ENCODE measurements at regions of chr1 and their contacts with region 1.

Region 1: DNA sequence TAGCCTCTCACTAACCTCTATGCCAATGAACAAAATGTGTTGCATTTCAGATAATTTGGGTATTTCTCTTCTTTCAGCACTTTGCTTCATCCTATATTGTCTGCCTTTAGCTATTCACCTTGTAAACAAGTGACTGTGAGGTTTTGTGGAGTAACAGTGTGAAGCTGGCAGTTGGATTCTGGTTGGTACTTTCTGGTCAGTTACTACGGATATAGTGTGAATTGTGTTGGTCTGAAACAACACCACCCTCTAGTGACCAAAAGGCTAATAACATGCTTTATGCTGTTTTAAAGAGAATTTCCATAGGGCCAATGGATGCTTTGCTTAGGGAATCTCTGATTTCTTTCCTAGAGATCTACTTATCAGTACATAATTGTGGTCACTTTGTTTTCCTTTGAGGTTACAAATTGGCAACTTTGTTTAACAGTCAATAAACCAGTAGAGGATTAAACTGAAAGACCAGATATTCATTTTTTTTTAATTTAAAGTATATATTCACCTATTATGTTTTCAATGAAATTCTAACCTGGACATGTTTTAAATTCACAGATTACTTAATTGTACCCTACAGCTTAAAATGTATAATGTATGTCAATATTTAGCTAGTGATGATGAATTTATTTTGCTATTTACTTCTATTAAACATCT is 2.5 kb upstream of the PTGER3 start:
- DNase-seq: peak; percentile 71
- CTCF ChIP-seq: peak; percentile 48

Region 2: GRCh38 chr1:70142075-70142474 is 908.0 kb before region 1 on chr1:
- in situ Hi-C with region 1: loop called (anchors 25 kb)
- DNase-seq: no peak
- CTCF ChIP-seq: no peak

Region 3: DNA sequence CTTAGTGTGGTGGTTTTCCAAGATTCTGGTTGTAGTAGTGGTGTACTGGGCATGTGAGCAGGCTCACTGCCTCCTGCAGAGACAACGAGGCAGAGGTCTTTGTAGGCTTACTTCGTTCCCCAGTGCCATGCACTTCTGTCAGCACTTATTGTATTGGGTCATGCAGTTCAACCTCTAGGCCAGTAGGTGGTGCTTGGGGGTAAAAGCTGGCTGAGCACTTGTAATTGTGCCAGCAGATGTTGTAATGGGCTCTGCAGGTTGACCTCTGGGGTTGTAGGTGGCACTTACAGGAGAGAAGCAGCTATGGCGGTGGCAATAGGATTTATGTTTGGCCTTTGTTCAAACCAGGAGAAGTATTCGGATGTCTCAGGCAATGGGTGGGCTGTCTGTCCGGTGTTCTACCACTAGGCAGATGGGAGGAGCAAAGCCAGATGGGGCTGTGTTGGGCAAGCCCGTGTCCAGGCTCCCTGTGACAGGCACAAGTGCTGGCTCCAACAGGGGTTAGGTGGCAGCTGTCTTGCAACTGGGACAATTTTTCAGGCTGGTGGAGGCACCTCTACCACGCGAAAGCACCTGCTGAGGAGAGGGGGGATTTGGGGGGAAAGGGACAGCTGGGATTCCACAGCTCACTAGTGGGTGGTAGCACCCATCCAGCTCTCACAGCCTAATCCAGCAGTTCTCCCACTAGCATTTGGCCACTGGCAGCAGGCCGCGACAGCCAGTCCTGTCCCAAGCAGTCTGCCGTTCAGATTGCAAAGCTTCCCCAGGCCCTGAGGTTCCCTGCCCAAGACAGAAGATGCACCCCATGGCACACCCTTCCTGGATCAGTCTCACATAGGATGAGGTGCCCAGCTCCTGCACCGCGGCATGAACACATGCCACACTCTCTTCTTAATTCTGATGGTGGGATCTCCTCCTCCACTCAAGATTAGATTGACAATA is 364.5 kb before region 1 on chr1:
- in situ Hi-C with region 1: loop called (anchors 25 kb)
- DNase-seq: peak; percentile 47
- CTCF ChIP-seq: peak; percentile 92

Region 4: DNA sequence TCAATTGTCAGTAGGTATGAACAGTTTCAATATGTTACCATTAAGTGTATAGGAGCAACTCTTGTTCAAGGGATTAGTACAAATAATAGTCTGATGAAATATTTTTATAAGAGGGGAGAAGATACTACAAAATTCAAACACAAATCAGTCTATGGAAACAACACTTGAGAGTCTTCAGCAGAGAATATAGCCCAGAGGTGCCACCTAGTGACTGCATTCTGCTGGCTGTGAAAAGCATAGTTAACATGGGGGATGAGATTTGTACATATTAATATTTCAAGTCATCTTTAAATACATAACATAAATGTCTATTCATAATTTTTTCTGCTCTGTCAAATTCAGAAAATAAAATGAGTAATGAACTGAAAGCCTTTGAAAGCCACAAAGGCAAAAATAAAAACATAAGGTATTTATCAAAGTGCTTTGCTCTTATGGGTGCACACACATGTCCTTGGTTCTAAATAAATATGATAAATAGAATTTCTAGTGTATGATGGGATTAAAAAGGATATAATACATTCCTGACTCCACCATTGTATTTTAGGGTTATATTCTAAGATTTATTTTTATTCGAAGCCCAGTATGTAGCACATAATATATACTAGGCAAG is 471.7 kb after region 1 on chr1:
- in situ Hi-C with region 1: no loop called
- DNase-seq: no peak
- CTCF ChIP-seq: peak; percentile 34